Ascending aorta (tissue), 2 donors: ENCODE measurements at regions of chr20 and their contacts with region 1.

Region 1: DNA sequence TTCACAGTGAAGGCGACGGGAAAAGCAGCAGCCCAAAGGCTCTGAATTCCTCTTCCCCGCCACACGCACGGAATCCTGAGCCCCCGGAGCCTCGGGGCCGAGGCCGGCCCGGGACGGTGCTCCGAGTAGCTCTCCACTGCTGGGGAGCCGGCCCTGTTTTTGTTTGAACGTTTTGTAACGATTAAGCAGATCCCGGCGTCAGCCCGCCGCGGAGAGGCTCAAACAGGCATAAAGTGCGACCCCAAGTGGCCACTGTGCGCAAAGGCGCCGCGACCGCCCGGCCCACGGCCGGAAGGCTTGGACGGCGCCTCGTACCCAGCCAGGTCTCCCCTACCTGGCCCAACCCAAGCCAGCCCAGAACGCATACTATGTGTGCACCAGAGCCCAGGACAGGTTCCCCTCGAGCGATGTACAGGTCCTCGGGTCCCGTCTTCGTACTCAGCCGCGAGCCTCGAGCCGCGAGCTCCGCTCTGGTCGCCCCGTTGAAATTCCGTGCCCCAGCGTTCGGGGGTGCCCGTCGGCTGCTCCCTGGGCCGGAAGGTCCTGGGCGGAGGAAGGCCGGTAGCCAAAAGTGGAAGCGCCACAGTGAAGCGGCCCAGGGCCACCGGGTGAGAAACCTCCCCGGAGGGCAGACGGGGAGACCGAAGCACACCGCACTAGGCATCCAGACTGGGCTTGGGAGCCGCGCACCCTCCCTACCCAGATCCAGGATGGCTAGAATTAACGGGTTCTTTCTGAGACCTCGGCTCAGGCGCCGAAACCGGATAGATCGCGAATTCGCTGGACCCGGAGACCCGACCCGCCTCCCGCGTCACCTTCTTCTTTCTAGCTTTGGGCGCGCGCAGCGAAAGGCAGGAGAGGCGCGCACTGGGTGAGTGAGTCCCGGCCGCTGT is 1.2 kb upstream of the MAFB start:
- DNase-seq: peak in 1 of 2 donors; percentile 95
- H3K4me3 ChIP-seq: peak overlapping the region; percentile 60 to 79
- H3K27ac ChIP-seq: peak overlapping the region; percentile 95 to 96
- H3K4me1 ChIP-seq: peaks cover 0 to 8% of the 10 kb centered on the region in 2 donors
- H3K27me3 ChIP-seq: no peaks in the 10 kb centered on the region
- CTCF ChIP-seq: peak; percentile 83 to 95 (median 94)

Region 2: DNA sequence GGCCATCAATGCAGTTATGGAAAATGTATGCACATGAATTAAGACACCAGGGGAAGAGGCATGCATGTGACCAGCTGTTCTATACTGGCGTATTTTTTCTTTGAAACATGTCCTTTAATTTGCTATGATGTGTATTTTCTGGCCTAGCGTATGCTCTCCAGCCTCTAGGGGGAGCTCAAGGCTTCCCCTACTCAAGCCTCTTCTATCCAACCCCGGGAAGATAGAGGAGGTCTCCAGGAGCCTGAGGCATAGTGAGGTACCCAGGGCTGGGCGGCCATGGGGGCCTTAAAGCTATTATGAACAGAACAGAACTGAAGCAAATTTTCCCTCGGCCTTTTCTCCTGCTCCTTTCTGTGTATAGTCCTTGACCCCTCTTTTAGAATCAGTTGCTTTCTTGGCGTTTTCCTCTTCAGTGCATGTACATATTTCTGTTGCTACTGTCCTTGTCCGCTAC is 530.1 kb before region 1 on chr20:
- intact Hi-C with region 1: loop called (anchors 1 kb)
- DNase-seq: peak in 1 of 2 donors; percentile 71
- H3K4me3 ChIP-seq: no peak overlapping the region
- H3K27ac ChIP-seq: no peak overlapping the region
- H3K4me1 ChIP-seq: no peaks in the 10 kb centered on the region
- H3K27me3 ChIP-seq: no peaks in the 10 kb centered on the region
- CTCF ChIP-seq: peak; percentile 40 to 82 (median 61)

Region 3: GRCh38 chr20:40265825-40266533 is 424.2 kb before region 1 on chr20:
- intact Hi-C with region 1: loop called (anchors 1 kb)
- DNase-seq: no peak
- H3K4me3 ChIP-seq: no peak overlapping the region
- H3K27ac ChIP-seq: no peak overlapping the region
- H3K4me1 ChIP-seq: no peaks in the 10 kb centered on the region
- H3K27me3 ChIP-seq: no peaks in the 10 kb centered on the region
- CTCF ChIP-seq: peak; percentile 33 to 60 (median 44)

Region 4: DNA sequence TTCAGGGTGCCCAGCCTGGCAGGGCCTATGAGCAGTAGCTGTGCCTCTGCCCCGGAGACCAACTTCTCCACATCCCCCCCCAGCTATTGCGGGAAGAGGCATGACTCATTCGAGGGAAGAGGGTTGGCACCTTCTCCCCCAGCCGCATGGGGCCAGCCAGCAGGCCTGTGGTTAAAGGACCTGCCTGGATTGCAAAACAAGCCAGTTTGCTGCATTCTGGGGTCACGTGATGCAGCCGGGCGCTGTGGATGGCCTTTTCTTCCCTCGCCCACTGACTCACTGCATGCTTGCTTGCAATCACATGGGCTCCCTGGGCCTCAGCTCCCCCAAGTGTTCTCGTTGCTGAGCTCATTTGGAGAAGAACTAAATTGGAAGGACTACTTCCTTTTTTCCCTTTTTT is 183.6 kb before region 1 on chr20:
- intact Hi-C with region 1: loop called (anchors 1 kb)
- DNase-seq: peak; percentile 96 to 98
- H3K4me3 ChIP-seq: no peak overlapping the region
- H3K27ac ChIP-seq: peak overlapping the region; percentile 62 to 67
- H3K4me1 ChIP-seq: peaks cover 0 to 14% of the 10 kb centered on the region in 2 donors
- H3K27me3 ChIP-seq: no peaks in the 10 kb centered on the region
- CTCF ChIP-seq: no peak

Region 5: DNA sequence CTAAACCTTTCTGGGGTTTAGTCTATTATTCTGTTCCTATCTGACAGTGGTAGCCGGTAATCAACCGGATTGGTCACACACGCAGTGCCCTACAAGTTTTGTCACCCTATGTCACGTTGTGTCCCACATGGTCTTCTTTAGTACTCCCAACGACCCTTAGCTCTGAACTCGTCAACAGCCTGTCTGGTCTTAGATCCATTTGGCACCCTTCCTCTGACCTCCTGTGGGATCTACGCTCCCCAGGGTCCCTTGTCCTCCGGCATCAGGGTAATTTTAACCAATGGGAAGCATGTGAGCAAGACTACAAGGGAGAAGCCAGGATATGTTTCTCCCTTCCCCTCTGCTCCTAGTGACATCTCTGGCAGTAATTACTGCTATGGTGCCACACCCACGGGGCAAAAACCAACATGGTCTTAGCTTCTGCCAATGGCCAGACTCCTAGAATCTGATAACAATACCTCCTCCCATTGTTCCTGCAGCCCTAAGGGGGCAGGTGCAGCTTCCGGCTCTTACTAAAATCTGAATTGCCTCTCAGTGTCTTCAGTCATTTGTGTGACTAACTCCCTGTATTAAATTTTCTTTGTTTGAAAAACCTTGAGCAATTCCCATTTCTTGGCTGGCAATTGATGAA is 57.7 kb before region 1 on chr20:
- intact Hi-C with region 1: loop called (anchors 2 kb)
- DNase-seq: no peak
- H3K4me3 ChIP-seq: no peak overlapping the region
- H3K27ac ChIP-seq: no peak overlapping the region
- H3K4me1 ChIP-seq: peaks cover 0 to 11% of the 10 kb centered on the region in 2 donors
- H3K27me3 ChIP-seq: no peaks in the 10 kb centered on the region
- CTCF ChIP-seq: no peak

Region 6: GRCh38 chr20:41136680-41137613 is 446.8 kb after region 1 on chr20 and contains the start of gene PLCG1:
- intact Hi-C with region 1: loop called (anchors 2 kb)
- DNase-seq: peak; percentile 46 to 94
- H3K4me3 ChIP-seq: peak within 1 kb of the TSS; percentile 86 to 99
- H3K27ac ChIP-seq: peak within 1 kb of the TSS; percentile 98
- H3K4me1 ChIP-seq: peaks cover 0 to 35% of the 10 kb centered on the region in 2 donors
- H3K27me3 ChIP-seq: no peaks in the 10 kb centered on the region
- CTCF ChIP-seq: peak in 1 of 3 experiments; percentile 20
- total RNA-seq, gene PLCG1: 168 TPM

Region 7: DNA sequence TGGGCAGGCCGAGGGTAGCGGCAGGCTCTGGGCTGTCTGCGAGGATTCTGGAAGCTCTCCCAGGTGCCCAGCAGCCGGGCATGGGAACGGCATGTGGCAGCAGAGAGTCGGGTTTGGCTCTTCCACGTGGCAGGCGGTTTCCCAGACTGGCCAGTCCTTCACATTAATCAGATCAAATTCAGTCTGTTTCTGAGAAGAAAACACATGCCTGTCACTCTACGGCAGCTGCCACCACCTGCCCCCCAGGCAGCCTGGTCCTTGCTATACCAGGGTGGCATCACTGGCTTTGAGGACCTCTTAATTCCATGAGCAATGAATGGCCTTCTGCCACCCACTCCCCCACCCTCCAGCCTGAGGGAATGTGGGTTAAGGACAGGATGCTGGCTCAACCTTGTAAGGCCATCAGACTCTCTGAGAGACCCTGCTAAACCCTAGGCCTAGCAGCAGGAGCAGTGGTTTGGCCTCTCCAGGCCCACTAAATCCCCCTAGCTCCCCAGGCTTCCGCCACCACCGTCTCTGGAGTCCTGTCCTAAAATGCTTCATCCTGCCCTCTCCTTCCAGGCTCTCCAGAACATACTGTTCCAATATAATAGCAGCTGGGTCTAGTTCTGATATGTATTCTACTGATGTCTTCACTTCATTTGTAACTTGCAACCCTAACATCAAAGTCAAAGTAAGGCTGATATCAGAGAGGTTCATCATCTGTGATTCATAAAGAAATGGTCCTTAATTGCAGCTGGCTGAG is 495.0 kb after region 1 on chr20:
- intact Hi-C with region 1: no loop called
- DNase-seq: no peak
- H3K4me3 ChIP-seq: no peak overlapping the region
- H3K27ac ChIP-seq: peak overlapping the region; percentile 46 to 56
- H3K4me1 ChIP-seq: no peaks in the 10 kb centered on the region
- H3K27me3 ChIP-seq: no peaks in the 10 kb centered on the region
- CTCF ChIP-seq: peak in 1 of 3 experiments; percentile 38